GM10248 (cell line): ENCODE measurements at regions of chr11 and their contacts with region 1.

Region 1: DNA sequence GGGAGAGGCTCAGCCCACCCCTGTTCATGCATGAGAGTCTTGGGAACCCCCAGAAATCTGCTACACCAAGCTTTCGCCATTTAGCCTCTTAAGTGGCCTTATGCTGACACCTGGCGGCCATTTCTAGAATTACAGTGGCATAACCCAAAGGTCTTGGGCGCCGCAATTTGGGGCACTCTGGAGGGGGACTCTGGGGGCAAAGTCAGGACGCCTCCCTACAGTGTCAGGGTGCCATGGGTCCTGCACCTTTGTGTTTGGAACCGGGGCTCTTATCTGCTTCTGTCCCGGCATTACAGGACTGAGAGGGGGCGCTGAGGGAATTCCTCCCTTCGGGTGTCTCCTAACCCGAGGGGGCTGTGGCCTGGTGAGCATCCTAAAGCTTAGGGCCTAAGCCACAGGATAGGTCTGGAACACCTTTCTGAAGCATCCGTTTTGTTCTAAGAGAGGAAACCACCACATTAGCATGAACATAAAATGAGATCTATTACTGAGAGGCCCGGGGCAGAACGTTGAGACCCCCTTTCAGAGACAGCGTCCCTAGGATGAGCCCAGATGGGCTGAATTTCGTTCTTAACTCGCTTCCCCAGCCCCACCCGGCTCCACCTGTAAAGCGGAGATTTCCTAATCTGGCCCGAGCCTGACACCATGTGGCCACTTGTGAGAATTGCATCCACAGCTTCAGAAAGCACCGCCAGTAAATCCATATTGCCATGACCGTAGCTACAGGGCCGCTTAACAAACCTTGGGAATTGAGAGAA is 9.3 kb downstream of the INS start:
- DNase-seq: peak; percentile 84
- CTCF ChIP-seq: peak; percentile 88

Region 2: DNA sequence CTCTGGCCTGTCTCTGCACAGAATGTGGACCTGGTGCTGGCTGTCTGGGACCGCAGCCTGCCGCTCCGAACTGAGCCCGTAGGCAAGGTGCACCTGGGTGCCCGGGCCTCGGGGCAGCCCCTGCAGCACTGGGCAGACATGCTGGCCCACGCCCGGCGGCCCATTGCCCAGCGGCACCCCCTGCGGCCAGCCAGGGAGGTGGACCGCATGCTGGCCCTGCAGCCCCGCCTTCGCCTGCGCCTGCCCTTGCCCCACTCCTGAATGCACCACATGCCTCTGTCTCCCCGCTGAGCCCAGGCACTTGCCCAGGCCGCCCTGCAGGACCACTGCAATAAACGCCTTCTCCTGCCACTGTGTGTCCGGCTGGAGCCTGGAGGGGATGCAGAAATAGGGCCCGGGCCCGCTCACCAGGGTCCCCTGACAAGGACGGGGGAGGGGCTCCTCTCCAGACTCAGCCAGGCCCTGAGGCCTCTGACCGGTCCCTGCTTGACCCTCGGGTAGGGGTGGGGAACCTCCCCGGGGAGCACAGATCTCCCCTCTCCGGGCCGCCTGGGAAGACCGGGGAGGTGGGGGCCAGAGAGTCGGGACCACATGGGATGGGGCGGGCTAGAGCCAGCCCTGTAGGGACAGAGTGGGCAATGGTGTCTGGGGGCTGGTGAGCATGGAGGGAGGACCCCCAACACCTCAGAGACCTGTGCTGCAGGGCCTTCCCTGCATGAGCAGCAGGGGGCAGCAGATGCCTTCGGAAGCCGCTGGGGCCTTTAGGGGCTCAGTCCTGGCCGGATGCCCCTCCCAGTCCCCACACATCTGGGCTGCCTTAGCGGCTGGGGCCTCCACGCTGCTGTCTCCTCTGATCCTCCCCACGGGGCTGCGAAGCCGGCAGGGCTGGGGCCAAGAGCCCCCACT is 314.3 kb before region 1 on chr11:
- CTCF ChIA-PET with region 1: interaction called, 112 read pairs
- POLR2A ChIA-PET with region 1: no interaction called
- DNase-seq: peak; percentile 89
- CTCF ChIP-seq: peak; percentile 94

Region 3: DNA sequence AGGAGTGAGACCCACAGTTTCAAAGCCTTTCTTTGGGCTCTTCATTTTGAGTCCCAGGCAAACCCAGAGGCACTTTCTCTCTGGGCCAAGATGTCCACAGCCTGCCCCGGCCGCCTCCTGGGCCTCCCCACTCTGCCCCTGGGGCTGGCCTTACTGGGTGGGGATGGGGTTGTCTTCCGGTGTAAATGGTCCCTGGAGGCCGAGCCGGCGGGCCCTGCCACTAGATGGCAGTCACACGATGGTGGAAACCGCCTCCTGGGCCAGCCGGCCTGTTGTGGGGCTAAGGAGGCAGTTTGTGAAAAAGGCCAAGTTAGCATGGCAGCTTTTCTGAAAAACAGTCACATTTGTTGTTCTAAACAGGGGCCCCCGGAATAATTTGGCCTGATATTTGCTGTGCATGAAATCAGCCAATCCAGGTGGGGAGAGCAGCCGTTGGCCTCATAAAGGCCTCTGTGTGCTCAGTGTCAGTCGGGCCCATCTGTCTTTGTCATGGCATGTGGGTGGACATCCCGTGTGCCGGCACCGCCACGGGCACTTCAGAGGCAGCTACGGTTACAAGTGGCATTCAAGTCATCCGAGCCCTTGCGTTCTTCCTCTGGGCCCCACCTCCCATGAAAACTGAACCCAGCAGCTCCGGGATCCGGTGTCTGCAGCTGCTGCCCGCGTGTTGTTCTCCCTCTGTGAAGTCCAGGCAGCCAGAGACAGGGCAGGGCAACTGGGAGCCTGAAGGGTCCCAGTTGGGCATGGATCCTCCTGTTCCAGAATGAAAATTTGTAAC is 198.0 kb before region 1 on chr11:
- CTCF ChIA-PET with region 1: interaction called, 55 read pairs
- POLR2A ChIA-PET with region 1: no interaction called
- DNase-seq: no peak
- CTCF ChIP-seq: no peak

Region 4: DNA sequence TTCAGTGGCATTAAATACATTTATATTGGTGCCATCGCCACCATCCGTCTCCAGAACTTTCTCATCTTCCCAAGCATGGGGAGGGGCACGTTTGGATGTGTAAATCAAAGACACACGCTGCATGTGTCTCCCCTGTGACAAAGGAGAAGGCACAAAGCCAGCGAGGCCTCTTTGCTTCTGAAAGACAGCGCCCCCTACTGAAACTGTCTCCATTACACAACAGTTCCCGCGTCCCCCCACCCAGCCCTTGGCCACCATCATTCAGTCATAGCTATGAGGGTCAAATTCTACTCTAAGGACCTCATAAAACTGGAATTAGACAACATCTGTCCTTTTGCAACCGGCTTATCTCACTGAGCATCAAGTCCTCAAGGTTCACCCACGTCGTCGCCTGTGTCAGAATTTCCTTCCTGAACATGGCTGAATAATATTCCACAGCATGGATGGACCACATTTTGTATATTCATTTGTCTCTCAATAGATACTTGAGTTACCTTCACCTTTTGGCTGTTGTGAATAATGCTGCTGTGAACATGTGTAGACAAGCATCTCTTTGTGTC is 77.3 kb before region 1 on chr11:
- CTCF ChIA-PET with region 1: interaction called, 10 read pairs
- POLR2A ChIA-PET with region 1: no interaction called
- DNase-seq: peak; percentile 16
- CTCF ChIP-seq: no peak

Region 5: DNA sequence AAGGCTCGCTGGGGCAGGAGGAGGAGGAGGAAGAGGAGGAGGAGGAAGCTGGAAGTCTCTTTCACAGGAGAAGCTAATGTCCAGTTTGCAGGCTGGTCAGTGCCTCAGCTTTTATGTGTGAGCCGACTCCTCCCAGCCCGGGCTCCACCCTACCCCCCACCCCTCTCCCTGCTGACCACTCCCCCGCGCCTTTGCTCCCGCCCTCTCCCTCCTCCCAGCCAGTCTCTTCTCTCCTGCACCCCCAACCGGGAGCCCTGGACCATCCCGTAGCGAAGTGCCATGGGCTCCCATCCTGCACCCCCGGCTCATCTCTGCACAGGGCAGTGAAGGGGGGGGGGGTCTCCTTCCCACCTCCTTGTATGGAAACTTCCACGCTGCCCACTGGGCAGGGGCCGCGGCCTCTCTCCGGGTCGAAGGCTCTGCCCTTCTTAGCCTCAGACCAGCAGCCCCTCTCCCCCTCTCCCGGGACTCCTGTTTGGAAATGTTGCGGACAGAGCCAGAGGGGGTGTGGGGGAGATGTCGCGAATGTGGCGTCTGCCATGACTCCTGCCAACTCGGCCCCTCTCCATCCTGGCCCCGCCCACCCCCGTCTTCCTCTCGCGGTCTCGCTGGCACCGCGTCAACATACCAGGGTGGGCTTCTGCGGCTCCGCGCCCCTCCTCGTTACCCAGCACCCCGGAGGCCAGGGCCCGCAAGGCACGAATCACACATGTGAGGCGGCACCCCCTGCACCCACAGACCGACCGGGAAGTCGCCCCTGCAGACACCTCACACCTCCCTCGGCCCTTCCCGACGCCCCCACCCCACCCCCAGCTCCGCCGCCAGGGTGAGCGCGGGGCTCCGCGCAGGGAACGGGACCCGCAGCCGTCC is 14.2 kb before region 1 on chr11:
- CTCF ChIA-PET with region 1: interaction called, 43 read pairs
- POLR2A ChIA-PET with region 1: no interaction called
- DNase-seq: no peak
- CTCF ChIP-seq: no peak

Region 6: GRCh38 chr11:2256923-2257716 is 105.4 kb after region 1 on chr11:
- CTCF ChIA-PET with region 1: no interaction called
- POLR2A ChIA-PET with region 1: no interaction called
- DNase-seq: no peak
- CTCF ChIP-seq: no peak

Region 7: GRCh38 chr11:2566223-2567014 is 414.7 kb after region 1 on chr11:
- CTCF ChIA-PET with region 1: no interaction called
- POLR2A ChIA-PET with region 1: no interaction called
- DNase-seq: no peak
- CTCF ChIP-seq: no peak

Region 8: DNA sequence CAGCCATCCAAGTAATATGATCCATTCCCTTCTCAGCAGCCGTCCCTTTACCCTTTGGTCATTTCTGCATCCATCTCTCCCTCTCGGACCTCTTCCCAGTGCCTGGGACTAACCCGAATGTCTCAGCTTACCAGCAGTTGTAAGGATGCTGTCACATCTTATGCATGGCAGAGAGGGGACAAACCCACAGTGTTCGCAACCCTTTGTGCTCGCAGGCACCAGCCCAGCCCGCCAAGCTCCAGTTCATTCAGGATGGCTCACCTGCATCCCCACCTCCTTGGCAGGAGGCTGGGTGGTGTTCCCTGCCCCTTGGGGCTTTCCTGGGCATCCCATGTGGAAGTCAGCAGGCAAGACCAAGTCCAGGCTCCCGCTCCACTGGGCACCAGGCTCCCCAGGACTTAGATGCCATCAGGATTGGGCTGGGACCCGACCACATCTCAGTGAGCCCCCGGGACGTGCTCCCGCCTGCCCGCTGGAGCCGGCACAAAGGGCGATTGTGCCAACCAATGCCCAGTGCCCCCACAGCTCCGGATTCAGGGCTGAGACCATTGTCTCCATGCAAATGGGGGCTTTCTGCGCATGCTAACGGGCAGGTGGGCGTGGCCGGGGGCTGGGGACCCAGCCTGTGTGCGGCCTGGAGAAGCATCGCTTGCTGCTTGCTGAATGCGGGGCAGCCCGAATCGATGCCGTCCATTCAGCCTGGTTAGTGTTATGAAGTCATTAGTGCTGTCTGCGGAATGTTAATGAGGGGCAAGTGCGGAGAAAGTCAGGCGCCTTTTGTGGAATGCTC is 439.5 kb after region 1 on chr11:
- CTCF ChIA-PET with region 1: no interaction called
- POLR2A ChIA-PET with region 1: no interaction called
- DNase-seq: peak; percentile 11
- CTCF ChIP-seq: no peak